ENCODE measurements at regions of chr9 and their contacts with region 1.

Region 1: DNA sequence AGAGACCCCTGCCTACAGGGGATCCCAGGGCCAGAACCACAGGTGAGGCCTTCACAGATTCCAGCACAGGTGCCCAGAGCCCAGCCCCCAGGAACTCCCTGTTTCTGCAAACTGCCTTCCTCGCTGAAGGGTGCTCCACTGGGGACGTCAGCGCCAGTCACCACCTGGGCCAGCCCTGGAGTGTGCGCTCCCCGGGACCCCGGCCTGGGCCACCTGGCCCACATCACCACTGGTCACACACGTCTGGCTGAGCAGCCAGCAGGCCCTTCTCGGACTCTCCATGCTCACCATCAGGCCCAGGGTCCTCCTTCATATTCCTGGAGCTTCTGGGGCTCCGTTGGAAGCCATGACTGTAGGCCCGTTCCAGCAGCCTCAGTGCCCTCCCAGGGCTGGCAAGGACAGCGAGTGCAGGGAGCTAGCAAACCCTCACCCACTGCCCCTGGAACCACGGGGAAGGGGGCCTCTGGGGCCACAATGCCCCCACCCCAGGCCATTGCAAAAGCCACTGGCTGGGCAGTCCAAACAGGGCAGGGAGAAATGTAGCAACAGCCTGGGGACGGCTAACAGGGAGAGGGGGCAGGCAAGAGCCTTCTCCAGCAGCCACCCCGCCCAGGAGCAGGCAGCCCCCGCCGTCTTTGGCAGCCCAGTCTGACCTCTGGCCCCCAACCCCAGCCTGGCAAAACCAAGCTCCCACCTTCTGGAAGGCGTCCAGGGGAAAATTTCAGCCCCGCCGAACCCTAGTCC is 1.3 kb downstream of the AGPAT2 start:
- DNase-seq: no peak
- H3K4me3 ChIP-seq: peak overlapping the region; percentile 77
- H3K27ac ChIP-seq: peak overlapping the region; percentile 87
- H3K4me1 ChIP-seq: peaks cover 6% of the 10 kb centered on the region
- H3K27me3 ChIP-seq: no peaks in the 10 kb centered on the region
- CTCF ChIP-seq: no peak

Region 2: GRCh38 chr9:136644598-136645351 is 41.2 kb before region 1 on chr9:
- CTCF ChIA-PET with region 1: interaction called, 13 read pairs
- POLR2A ChIA-PET with region 1: no interaction called
- intact Hi-C with region 1: no loop called
- DNase-seq: no peak
- H3K4me3 ChIP-seq: peak overlapping the region; percentile 0
- H3K27ac ChIP-seq: no peak overlapping the region
- H3K4me1 ChIP-seq: peaks cover 12% of the 10 kb centered on the region
- H3K27me3 ChIP-seq: no peaks in the 10 kb centered on the region
- CTCF ChIP-seq: peak; percentile 95

Region 3: DNA sequence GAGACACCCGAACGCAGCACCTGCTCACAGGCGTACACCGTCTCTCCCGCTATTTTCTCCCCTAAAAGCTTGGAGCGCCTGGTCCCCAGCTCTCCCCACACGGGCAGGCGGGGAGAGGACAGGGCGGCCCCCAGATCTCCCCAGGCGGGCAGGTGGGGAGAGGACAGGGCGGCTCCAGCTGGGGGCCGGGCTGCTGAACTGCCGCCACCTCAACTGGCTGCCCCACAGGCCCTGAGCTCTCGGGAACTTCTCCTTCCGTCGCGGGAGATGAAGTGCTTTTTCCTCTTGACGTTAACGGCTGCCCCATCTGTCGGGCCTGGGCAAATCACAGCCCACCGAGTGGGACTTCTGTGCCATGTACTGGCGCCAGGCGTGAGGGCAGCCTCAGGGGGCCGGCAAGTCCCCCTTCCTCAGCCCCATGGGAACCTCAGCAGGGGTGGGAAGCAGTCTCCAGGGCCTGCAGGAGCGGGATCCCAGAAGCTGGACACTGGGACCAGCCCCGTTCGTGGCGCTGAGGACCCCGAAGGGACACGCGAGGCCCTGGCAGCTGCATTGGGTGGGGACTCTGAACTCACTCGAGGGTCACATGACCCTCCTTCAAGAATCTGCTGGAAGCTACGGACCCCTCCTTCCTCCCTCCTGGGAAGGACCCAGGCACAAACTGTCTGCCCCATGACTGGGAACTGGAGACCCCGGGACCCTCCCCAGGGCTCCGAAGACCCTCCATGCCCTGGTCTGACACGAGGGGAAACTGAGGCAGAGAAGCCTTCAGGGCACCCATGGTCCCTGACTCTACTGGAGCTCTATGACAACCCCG is 29.0 kb before region 1 on chr9:
- CTCF ChIA-PET with region 1: no interaction called
- POLR2A ChIA-PET with region 1: no interaction called
- intact Hi-C with region 1: no loop called
- DNase-seq: no peak
- H3K4me3 ChIP-seq: no peak overlapping the region
- H3K27ac ChIP-seq: peak overlapping the region; percentile 88
- H3K4me1 ChIP-seq: peaks cover 14% of the 10 kb centered on the region
- H3K27me3 ChIP-seq: no peaks in the 10 kb centered on the region
- CTCF ChIP-seq: no peak

Measured in A673 (cell line).